HAP-1 (cell line): ENCODE measurements at regions of chr11 and their contacts with region 1.

Region 1: DNA sequence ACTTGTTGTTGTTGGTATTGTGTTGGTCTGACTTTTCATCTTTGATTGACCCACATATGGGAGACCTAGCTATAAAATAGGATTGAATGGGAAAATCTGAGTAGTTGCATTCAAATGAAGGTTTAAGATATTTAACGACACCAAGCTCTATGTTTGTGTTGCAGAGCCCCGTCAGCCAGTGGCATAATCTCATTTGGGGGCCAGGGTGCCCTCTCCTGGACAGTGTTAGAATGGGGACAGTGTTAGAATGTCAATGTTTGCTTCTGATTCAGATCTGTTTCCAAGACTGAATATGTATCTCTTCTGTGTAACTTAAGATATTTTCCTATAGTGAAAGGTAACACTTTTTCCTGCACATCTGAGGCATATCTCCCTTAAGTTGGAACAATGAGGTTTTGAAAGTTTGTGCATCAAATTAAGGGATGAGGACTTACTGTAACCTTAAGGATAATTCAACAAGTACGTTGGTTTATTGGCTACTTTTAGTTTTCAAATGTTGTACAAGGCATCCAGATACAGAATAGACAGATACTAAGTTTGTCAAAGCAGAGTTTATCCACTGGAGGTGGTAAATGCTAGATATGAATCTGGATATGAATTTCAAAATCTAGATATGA is 5.3 kb upstream of the OR52M1 start:
- DNase-seq: peak; percentile 13 to 75
- H3K4me3 ChIP-seq: no peak overlapping the region
- H3K4me1 ChIP-seq: no peaks in the 10 kb centered on the region
- H3K27me3 ChIP-seq: no peaks in the 10 kb centered on the region

Region 2: GRCh38 chr11:4187055-4187988 is 352.4 kb before region 1 on chr11:
- in situ Hi-C with region 1: loop called (anchors 10 kb)
- DNase-seq: peak; percentile 81 to 92
- H3K4me3 ChIP-seq: peak overlapping the region; percentile 45
- H3K4me1 ChIP-seq: no peaks in the 10 kb centered on the region; the same call in 1 of the 2 replicates
- H3K27me3 ChIP-seq: no peaks in the 10 kb centered on the region